ENCODE measurements at regions of chr20 and their contacts with region 1.

Region 1: DNA sequence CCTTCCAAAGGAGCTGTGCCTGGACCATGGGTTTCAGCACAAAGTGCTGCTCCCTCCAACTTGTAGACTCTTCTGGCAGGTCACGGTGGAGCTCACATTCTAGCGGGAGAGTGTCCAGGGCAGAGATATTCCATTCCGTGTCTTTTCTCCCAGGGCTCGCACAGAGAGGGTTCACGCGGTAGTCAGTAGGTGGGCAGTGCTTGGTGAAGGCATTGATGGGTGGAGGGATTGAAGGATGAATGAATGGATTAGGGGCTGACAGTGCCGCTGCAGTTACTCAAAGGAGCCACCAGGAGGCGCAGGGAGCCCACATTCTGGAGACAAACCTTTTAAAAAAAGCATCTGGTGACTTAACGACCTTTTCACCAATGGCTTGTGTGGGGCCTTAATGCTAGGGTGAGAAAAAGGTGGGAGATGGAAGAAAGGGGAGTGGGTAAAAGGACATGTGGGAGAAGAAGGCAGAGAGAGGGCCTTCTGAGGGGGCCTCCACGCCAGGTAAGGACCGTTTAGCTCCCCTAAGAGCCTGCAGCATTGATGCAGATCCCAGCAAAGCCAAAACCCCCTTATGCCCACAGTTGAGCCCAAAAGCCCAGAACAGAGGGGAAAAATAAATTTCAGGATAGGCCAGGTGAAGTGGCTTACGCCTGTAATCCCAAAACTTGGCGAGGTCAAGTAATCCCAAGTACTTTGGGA is 17.5 kb upstream of the FAM110A start:
- DNase-seq: peak; percentile 79
- ATAC-seq: peak; percentile 75
- H3K4me3 Mint-ChIP-seq: no peak overlapping the region
- H3K27ac Mint-ChIP-seq: no peak overlapping the region
- H3K4me1 Mint-ChIP-seq: peaks cover 6% of the 10 kb centered on the region
- H3K27me3 Mint-ChIP-seq: peaks cover 11% of the 10 kb centered on the region
- CTCF ChIP-seq: peak; percentile 98

Region 2: DNA sequence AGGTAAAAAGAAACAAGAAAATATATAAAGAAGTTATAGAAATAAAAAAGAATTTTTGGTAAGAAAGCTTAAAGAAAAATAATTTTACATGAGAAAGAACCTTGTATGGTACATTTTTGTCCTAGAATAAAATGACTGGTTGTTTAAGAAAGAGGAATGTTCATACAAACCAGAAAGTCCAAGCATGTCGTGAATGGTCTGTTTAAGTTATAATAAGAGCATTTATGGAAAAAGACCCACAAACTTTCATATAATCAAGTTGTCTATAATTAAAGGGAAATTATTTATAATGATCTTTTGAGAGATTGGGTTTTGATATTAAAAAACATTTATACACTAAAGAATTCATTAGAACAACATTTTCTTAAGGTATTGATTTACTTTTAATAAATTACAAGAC is 10.3 kb before region 1 on chr20:
- CTCF ChIA-PET with region 1: interaction called, 19 read pairs
- POLR2A ChIA-PET with region 1: no interaction called
- intact Hi-C with region 1: no loop called
- DNase-seq: no peak
- ATAC-seq: no peak
- H3K4me3 Mint-ChIP-seq: no peak overlapping the region
- H3K27ac Mint-ChIP-seq: no peak overlapping the region
- H3K4me1 Mint-ChIP-seq: no peaks in the 10 kb centered on the region
- H3K27me3 Mint-ChIP-seq: peaks cover 2% of the 10 kb centered on the region
- CTCF ChIP-seq: no peak

Region 3: DNA sequence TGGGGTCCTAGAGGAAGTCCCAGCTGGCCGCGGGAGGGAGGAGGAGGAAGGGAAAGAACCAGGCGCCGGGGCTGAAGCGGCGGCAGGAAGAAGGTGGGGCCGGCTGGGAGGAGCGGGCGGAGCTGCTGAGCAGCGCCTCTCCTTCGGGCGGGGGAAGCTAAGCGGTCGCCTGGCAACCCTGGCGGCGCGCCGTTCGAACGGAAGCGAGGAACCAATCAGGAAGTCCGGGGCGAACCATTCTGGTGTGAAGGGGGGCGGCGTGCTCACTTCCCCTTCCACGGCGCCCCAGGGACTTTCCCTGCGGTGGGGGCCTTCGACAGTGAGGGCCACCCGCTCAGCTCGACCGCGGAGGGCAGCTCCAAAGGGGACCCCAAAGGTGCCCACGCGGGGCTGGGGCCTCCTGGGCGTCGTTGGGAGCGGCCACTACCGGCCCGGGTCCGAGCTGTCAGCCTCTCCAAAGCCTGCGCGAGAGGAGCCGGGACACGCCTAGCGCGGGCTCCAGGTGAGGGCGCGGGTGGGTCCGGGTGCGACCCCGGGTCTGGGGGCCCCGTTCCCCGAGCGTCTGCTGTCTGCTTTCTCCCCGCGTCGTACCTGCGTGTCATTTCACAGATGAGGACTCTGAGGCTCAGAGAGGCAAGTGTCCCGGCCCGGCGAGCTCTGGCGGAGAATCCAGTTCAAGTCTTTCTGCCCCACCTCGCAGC is 17.5 kb after region 1 on chr20 and contains the start of gene FAM110A:
- CTCF ChIA-PET with region 1: interaction called, 39 read pairs
- POLR2A ChIA-PET with region 1: no interaction called
- intact Hi-C with region 1: no loop called
- DNase-seq: peak; percentile 97
- ATAC-seq: peak; percentile 94
- H3K4me3 Mint-ChIP-seq: peak within 1 kb of the TSS; percentile 89
- H3K27ac Mint-ChIP-seq: peak within 1 kb of the TSS; percentile 85
- H3K4me1 Mint-ChIP-seq: peaks cover 36% of the 10 kb centered on the region
- H3K27me3 Mint-ChIP-seq: no peaks in the 10 kb centered on the region
- CTCF ChIP-seq: no peak
- total RNA-seq, gene FAM110A: 20.5 to 23.1 TPM

Region 4: GRCh38 chr20:973785-974194 is 157.7 kb after region 1 on chr20:
- CTCF ChIA-PET with region 1: interaction called, 11 read pairs
- POLR2A ChIA-PET with region 1: no interaction called
- intact Hi-C with region 1: no loop called
- DNase-seq: peak; percentile 61
- ATAC-seq: peak; percentile 96
- H3K4me3 Mint-ChIP-seq: no peak overlapping the region
- H3K27ac Mint-ChIP-seq: peak overlapping the region; percentile 33
- H3K4me1 Mint-ChIP-seq: peaks cover 2% of the 10 kb centered on the region
- H3K27me3 Mint-ChIP-seq: peaks cover 3% of the 10 kb centered on the region
- CTCF ChIP-seq: peak; percentile 58

Measured in activated CD8-positive, alpha-beta T cell treated with anti-CD3 and anti-CD28 coated beads for 36 hours (primary cell).